H1 (cell line): ENCODE measurements at regions of chr9 and their contacts with region 1.

Region 1: DNA sequence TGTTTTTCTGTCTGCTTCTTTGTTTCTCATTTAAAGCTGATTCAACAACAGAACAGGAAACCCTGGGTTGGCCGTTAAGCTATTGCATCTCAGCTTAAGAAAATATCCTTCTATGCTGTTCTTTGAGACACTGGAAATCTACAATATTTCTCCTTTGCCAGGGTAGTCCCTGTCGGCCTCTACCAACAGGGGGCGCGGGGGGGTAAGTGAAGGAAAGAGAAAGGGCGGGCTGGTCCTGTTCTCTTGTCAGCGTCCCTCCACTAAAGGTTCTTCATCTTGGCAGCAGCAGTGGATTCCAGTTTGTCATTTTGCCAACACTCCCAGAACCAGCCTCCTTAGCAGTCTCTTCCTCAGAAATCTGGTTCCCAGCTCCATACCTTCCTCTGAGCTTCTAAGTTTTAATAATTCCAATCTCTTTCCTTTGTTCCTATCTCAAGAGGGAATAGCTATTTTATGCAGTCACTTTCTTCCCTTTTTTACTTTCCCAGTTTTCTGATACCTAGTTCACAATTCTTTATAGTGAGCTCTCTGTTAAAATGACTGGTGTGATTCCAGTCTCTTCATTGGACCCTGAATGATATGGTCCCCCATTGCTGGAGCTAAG is 222.3 kb downstream of the GLIS3 start:
- DNase-seq: peak in 1 of 2 experiments; percentile 92
- H3K4me3 ChIP-seq: no peak overlapping the region
- H3K27ac ChIP-seq: no peak overlapping the region
- H3K4me1 ChIP-seq: no peaks in the 10 kb centered on the region; a peak in 1 of 7 replicates
- H3K27me3 ChIP-seq: no peaks in the 10 kb centered on the region
- CTCF ChIP-seq: peak; percentile 62 to 80 (median 75)
- EP300 ChIP-seq: no peak
- POLR2A ChIP-seq: no peak
- RAD21 ChIP-seq: peak; percentile 61 to 72

Region 2: DNA sequence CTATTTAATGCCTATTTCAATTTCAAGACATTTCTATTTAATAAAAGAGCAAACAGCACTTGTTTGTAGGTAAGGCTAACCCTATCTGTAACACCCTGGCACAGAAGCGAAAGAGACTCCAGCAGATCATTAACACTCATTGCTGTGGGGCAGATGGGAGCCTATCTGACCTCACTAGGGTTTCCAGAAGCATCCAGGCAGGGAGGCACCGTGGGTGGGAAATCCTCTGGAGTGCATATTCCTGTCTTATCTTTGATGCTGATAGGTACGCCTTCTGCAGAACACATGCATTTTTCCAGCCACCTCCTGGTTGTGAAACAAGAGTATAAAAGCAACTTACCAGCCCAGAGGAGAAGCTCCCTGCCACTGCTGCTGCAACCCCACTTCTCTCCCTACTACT is 11.5 kb before region 1 on chr9:
- CTCF ChIA-PET with region 1: interaction called, 11 read pairs
- POLR2A ChIA-PET with region 1: no interaction called
- DNase-seq: no peak
- H3K4me3 ChIP-seq: no peak overlapping the region
- H3K27ac ChIP-seq: no peak overlapping the region
- H3K4me1 ChIP-seq: no peaks in the 10 kb centered on the region; a peak in 1 of 7 replicates
- H3K27me3 ChIP-seq: no peaks in the 10 kb centered on the region
- CTCF ChIP-seq: no peak
- EP300 ChIP-seq: no peak
- POLR2A ChIP-seq: no peak
- RAD21 ChIP-seq: no peak

Region 3: GRCh38 chr9:4147476-4148230 is 70.1 kb after region 1 on chr9:
- CTCF ChIA-PET with region 1: interaction called, 13 read pairs
- POLR2A ChIA-PET with region 1: no interaction called
- DNase-seq: no peak
- H3K4me3 ChIP-seq: no peak overlapping the region
- H3K27ac ChIP-seq: no peak overlapping the region
- H3K4me1 ChIP-seq: peaks cover 0 to 9% (median 3%) of the 10 kb centered on the region in 4 experiments; a peak in 2 of 7 replicates
- H3K27me3 ChIP-seq: no peaks in the 10 kb centered on the region
- CTCF ChIP-seq: no peak
- EP300 ChIP-seq: no peak
- POLR2A ChIP-seq: no peak
- RAD21 ChIP-seq: no peak

Region 4: GRCh38 chr9:4197548-4197947 is 119.9 kb after region 1 on chr9:
- CTCF ChIA-PET with region 1: interaction called, 16 read pairs
- POLR2A ChIA-PET with region 1: no interaction called
- DNase-seq: peak in 1 of 2 experiments; percentile 49
- H3K4me3 ChIP-seq: no peak overlapping the region
- H3K27ac ChIP-seq: no peak overlapping the region
- H3K4me1 ChIP-seq: no peaks in the 10 kb centered on the region
- H3K27me3 ChIP-seq: no peaks in the 10 kb centered on the region
- CTCF ChIP-seq: peak; percentile 71 to 87 (median 77)
- EP300 ChIP-seq: no peak
- POLR2A ChIP-seq: no peak
- RAD21 ChIP-seq: peak; percentile 75 to 79

Region 5: DNA sequence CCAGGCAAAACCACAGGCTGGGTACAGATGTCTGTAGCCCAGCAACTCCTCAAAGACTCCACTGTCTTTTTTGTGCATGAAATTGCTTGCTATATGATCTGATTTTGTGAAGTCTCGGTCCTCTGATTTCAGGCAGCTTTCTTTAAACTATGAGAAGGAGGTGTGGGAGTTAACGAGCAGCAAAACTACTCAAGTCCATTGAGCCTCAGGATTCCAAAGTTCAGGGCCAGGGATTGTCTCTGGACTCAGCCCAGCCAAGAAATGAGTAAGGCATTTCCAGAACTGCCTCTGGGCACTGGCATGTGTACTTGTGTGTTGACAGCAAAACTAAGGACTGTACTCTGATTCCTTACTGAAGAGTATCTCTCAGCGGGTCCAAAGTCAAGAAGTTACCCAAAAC is 275.6 kb after region 1 on chr9:
- CTCF ChIA-PET with region 1: no interaction called
- POLR2A ChIA-PET with region 1: no interaction called
- DNase-seq: no peak
- H3K4me3 ChIP-seq: no peak overlapping the region
- H3K27ac ChIP-seq: no peak overlapping the region
- H3K4me1 ChIP-seq: no peaks in the 10 kb centered on the region
- H3K27me3 ChIP-seq: no peaks in the 10 kb centered on the region
- CTCF ChIP-seq: no peak
- EP300 ChIP-seq: no peak
- POLR2A ChIP-seq: no peak
- RAD21 ChIP-seq: no peak

Region 6: DNA sequence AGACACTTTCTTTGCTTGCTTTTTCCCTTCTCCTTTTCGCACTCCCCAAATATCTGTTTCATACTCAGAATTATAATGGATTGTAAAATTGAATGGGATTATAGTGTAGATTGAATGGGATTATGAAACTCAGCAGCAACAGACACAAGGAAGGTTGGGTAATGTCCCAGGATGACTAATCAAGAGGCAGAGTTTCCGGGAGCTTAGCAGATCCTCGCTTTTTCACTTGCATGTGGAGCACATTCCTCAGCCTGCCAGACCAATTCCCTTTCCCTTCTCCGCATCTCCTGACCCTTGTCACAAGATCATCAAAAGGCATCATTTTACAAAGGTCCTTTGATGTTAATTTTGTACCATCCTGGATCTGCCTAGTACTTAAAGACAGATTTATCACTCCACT is 357.6 kb after region 1 on chr9:
- CTCF ChIA-PET with region 1: no interaction called
- POLR2A ChIA-PET with region 1: no interaction called
- DNase-seq: no peak
- H3K4me3 ChIP-seq: no peak overlapping the region
- H3K27ac ChIP-seq: no peak overlapping the region
- H3K4me1 ChIP-seq: no peaks in the 10 kb centered on the region
- H3K27me3 ChIP-seq: no peaks in the 10 kb centered on the region
- CTCF ChIP-seq: no peak
- EP300 ChIP-seq: no peak
- POLR2A ChIP-seq: no peak
- RAD21 ChIP-seq: no peak